HepG2 (cell line): ENCODE measurements at regions of chr3 and their contacts with region 1.

Region 1: GRCh38 chr3:194134757-194135528 is 1.0 kb upstream of the HES1 start:
- DNase-seq: peak; percentile 93
- ATAC-seq: peak; percentile 55
- H3K4me3 ChIP-seq: peak overlapping the region; percentile 57 to 70 (median 67)
- H3K27ac ChIP-seq: peak overlapping the region; percentile 94
- H3K4me1 ChIP-seq: peaks cover 64% of the 10 kb centered on the region
- H3K27me3 ChIP-seq: no peaks in the 10 kb centered on the region; a peak in 1 of 5 replicates
- CTCF ChIP-seq: no peak
- EP300 ChIP-seq: peak; percentile 55 to 75; a peak in 3 of 4 replicates
- POLR2A ChIP-seq: no peak
- RAD21 ChIP-seq: no peak

Region 2: GRCh38 chr3:193711964-193712598 is 422.9 kb before region 1 on chr3:
- CTCF ChIA-PET with region 1: no interaction called
- POLR2A ChIA-PET with region 1: interaction called, 7 read pairs
- in situ Hi-C with region 1: no loop called
- intact Hi-C with region 1: loop called (anchors 1 kb)
- DNase-seq: peak; percentile 99
- ATAC-seq: peak; percentile 97
- H3K4me3 ChIP-seq: peak overlapping the region; percentile 4 to 26 (median 7); a peak in 3 of 6 replicates
- H3K27ac ChIP-seq: peak overlapping the region; percentile 86
- H3K4me1 ChIP-seq: peaks cover 67% of the 10 kb centered on the region
- H3K27me3 ChIP-seq: no peaks in the 10 kb centered on the region
- CTCF ChIP-seq: peak; percentile 31; the same call in 1 of the 2 replicates
- EP300 ChIP-seq: peak; percentile 97 to 99
- POLR2A ChIP-seq: peak; percentile 5 to 37; a peak in 1 of 4 replicates
- RAD21 ChIP-seq: no peak

Region 3: DNA sequence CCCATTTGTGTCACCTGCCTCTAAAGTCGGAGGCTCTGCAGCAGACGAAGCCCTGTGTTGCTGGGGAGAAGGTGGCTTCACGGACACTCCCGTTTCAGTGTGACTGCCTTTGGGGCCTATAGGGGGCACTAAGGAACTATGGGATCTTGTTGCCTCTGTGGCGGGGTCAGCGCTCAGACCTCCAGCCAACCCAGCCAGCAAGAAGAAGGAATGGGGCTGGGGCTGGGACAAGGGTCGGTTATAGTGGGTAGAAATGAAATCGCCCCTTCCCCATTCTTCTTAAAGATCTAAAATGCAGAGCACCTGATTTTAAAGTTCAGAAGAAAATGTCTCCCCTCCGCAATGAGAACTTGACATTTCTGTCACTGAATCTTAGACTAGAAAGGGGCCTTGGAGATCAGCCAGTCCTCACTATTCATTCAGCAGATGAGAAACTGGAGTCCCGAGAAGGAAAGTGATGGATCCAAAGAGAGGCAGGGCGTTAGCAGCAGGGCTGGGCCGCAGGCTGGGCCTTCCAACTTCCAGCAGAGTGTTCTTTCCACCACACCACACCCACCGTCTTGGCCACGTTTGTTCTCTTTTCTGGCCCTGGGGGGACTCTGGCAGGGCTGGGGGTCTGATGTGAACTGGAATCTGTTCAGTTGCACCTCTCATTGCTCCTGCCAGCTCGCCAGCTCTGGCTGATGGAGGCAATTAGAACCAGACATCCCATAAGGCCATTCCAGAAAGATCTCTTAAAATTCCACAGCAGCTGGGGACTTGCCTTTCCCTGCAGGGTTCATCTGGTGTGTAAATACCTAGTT is 346.6 kb before region 1 on chr3:
- CTCF ChIA-PET with region 1: interaction called, 6 read pairs
- POLR2A ChIA-PET with region 1: no interaction called
- in situ Hi-C with region 1: loop called (anchors 5 kb)
- intact Hi-C with region 1: loop called (anchors 2 kb)
- DNase-seq: peak; percentile 64
- ATAC-seq: peak; percentile 98
- H3K4me3 ChIP-seq: no peak overlapping the region
- H3K27ac ChIP-seq: no peak overlapping the region
- H3K4me1 ChIP-seq: no peaks in the 10 kb centered on the region
- H3K27me3 ChIP-seq: peaks cover 0 to 16% of the 10 kb centered on the region in 2 experiments; a peak in 3 of 5 replicates
- CTCF ChIP-seq: peak; percentile 92
- EP300 ChIP-seq: no peak
- POLR2A ChIP-seq: no peak
- RAD21 ChIP-seq: peak; percentile 85

Region 4: GRCh38 chr3:194058189-194058571 is 76.8 kb before region 1 on chr3:
- CTCF ChIA-PET with region 1: no interaction called
- POLR2A ChIA-PET with region 1: interaction called, 35 read pairs
- in situ Hi-C with region 1: no loop called
- intact Hi-C with region 1: no loop called
- DNase-seq: peak; percentile 65
- ATAC-seq: peak; percentile 93
- H3K4me3 ChIP-seq: peak overlapping the region; percentile 43 to 56 (median 47)
- H3K27ac ChIP-seq: peak overlapping the region; percentile 73
- H3K4me1 ChIP-seq: peaks cover 54% of the 10 kb centered on the region
- H3K27me3 ChIP-seq: no peaks in the 10 kb centered on the region
- CTCF ChIP-seq: 0 out of 2 replicates have a peak, but pooled peaks have one; percentile 13
- EP300 ChIP-seq: 0 out of 4 replicates have a peak, but pooled peaks of 1 of the 2 experiments have one; percentile 38
- POLR2A ChIP-seq: peak; percentile 51 to 62; a peak in 2 of 4 replicates
- RAD21 ChIP-seq: no peak; the same call in 1 of the 2 replicates

Region 5: DNA sequence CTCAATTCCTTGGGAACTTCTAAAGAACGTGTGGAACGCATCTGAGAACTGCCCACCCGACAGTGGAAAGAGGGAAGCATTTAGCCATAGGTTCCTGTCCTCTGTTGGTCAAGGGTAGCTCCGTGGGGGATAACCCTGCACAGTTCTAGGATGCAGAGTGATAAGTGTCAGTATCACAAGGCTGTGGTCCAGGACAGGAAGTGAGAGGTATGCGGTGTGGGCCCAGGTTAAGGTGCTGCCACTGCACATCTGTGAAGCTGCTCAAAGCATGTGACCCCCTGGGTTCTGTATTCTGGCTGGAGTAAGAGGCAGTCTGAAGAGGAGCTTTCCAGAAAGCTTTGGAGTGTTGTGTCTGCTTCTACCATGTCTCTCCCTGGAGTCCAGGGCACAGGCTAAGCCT is 50.7 kb before region 1 on chr3:
- CTCF ChIA-PET with region 1: no interaction called
- POLR2A ChIA-PET with region 1: interaction called, 14 read pairs
- in situ Hi-C with region 1: loop called (anchors 10 kb)
- intact Hi-C with region 1: no loop called
- DNase-seq: no peak
- ATAC-seq: no peak
- H3K4me3 ChIP-seq: no peak overlapping the region
- H3K27ac ChIP-seq: no peak overlapping the region
- H3K4me1 ChIP-seq: peaks cover 68% of the 10 kb centered on the region
- H3K27me3 ChIP-seq: no peaks in the 10 kb centered on the region; a peak in 1 of 5 replicates
- CTCF ChIP-seq: no peak
- EP300 ChIP-seq: no peak
- POLR2A ChIP-seq: no peak
- RAD21 ChIP-seq: no peak

Region 6: GRCh38 chr3:194112120-194113106 is 22.5 kb before region 1 on chr3:
- CTCF ChIA-PET with region 1: no interaction called
- POLR2A ChIA-PET with region 1: interaction called, 39 read pairs
- in situ Hi-C with region 1: no loop called
- intact Hi-C with region 1: loop called (anchors 2 kb)
- DNase-seq: peak; percentile 98
- ATAC-seq: peak; percentile 96
- H3K4me3 ChIP-seq: peak overlapping the region in 1 of 3 experiments; percentile 13; a peak in 2 of 6 replicates
- H3K27ac ChIP-seq: peak overlapping the region; percentile 58
- H3K4me1 ChIP-seq: peaks cover 69% of the 10 kb centered on the region
- H3K27me3 ChIP-seq: no peaks in the 10 kb centered on the region
- CTCF ChIP-seq: no peak
- EP300 ChIP-seq: peak in 1 of 2 experiments; percentile 61; a peak in 2 of 4 replicates
- POLR2A ChIP-seq: no peak
- RAD21 ChIP-seq: no peak